ENCODE measurements at regions of chr2 and their contacts with region 1.

Region 1: DNA sequence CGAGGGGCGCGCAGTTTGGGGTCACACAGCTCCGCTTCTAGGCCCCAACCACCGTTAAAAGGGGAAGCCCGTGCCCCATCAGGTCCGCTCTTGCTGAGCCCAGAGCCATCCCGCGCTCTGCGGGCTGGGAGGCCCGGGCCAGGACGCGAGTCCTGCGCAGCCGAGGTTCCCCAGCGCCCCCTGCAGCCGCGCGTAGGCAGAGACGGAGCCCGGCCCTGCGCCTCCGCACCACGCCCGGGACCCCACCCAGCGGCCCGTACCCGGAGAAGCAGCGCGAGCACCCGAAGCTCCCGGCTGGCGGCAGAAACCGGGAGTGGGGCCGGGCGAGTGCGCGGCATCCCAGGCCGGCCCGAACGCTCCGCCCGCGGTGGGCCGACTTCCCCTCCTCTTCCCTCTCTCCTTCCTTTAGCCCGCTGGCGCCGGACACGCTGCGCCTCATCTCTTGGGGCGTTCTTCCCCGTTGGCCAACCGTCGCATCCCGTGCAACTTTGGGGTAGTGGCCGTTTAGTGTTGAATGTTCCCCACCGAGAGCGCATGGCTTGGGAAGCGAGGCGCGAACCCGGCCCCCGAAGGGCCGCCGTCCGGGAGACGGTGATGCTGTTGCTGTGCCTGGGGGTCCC is at the start of gene ITGA4:
- DNase-seq: peak; percentile 78 to 94 (median 86)
- ATAC-seq: peak; percentile 77
- H3K4me3 ChIP-seq: peak within 1 kb of the TSS; percentile 88
- H3K4me3 Mint-ChIP-seq: peak within 1 kb of the TSS; percentile 89
- H3K27ac ChIP-seq: peak within 1 kb of the TSS; percentile 85 to 91
- H3K27ac Mint-ChIP-seq: peak within 1 kb of the TSS; percentile 94
- H3K4me1 ChIP-seq: peaks cover 24% of the 10 kb centered on the region
- H3K4me1 Mint-ChIP-seq: peaks cover 53% of the 10 kb centered on the region
- H3K27me3 ChIP-seq: no peaks in the 10 kb centered on the region
- H3K27me3 Mint-ChIP-seq: no peaks in the 10 kb centered on the region
- CTCF ChIP-seq: peak; percentile 78
- total RNA-seq, gene ITGA4: 102 TPM

Region 2: GRCh38 chr2:181077128-181077709 is 380.0 kb before region 1 on chr2:
- CTCF ChIA-PET with region 1: interaction called, 4 read pairs
- POLR2A ChIA-PET with region 1: interaction called, 3 read pairs
- intact Hi-C with region 1: loop called (anchors 2 to 5 kb)
- DNase-seq: peak in 3 of 9 experiments; percentile 8 to 82 (median 76)
- ATAC-seq: peak; percentile 94
- H3K4me3 ChIP-seq: no peak overlapping the region
- H3K4me3 Mint-ChIP-seq: no peak overlapping the region
- H3K27ac ChIP-seq: no peak overlapping the region
- H3K27ac Mint-ChIP-seq: no peak overlapping the region
- H3K4me1 ChIP-seq: no peaks in the 10 kb centered on the region
- H3K4me1 Mint-ChIP-seq: no peaks in the 10 kb centered on the region
- H3K27me3 ChIP-seq: no peaks in the 10 kb centered on the region
- H3K27me3 Mint-ChIP-seq: no peaks in the 10 kb centered on the region
- CTCF ChIP-seq: peak; percentile 90

Region 3: DNA sequence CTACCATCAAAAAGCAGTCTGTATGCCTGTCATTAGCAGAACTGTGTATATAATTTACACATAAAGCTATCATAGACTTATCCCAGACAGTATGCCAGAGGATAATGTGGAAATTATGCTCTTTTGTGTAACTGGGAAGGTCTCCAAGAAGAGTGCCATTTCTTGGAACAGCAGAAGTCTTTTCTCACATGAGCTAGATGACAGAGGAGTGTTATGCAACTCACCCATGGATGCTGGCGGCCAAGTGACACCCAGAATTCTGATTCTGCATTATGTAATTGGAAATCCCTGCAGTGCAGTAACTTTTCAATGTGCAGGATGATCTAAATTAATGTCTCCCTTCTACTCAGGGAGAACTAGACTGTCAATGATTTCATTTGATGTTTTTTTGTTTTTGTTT is 316.8 kb before region 1 on chr2:
- CTCF ChIA-PET with region 1: interaction called, 10 read pairs
- POLR2A ChIA-PET with region 1: interaction called, 8 read pairs
- intact Hi-C with region 1: no loop called
- DNase-seq: peak in 2 of 9 experiments; percentile 60 to 73
- ATAC-seq: peak; percentile 15
- H3K4me3 ChIP-seq: no peak overlapping the region
- H3K4me3 Mint-ChIP-seq: peak overlapping the region; percentile 80
- H3K27ac ChIP-seq: peak overlapping the region; percentile 58 to 73
- H3K27ac Mint-ChIP-seq: peak overlapping the region; percentile 99
- H3K4me1 ChIP-seq: peaks cover 62% of the 10 kb centered on the region
- H3K4me1 Mint-ChIP-seq: peaks cover 79% of the 10 kb centered on the region
- H3K27me3 ChIP-seq: no peaks in the 10 kb centered on the region
- H3K27me3 Mint-ChIP-seq: no peaks in the 10 kb centered on the region
- CTCF ChIP-seq: no peak

Region 4: GRCh38 chr2:181275643-181276070 is 181.6 kb before region 1 on chr2:
- CTCF ChIA-PET with region 1: interaction called, 10 read pairs
- POLR2A ChIA-PET with region 1: interaction called, 4 read pairs
- intact Hi-C with region 1: no loop called
- DNase-seq: peak in 5 of 9 experiments; percentile 18 to 78 (median 59)
- ATAC-seq: peak; percentile 90
- H3K4me3 ChIP-seq: no peak overlapping the region
- H3K4me3 Mint-ChIP-seq: peak overlapping the region; percentile 35
- H3K27ac ChIP-seq: peak overlapping the region; percentile 17 to 68
- H3K27ac Mint-ChIP-seq: peak overlapping the region; percentile 79
- H3K4me1 ChIP-seq: peaks cover 31% of the 10 kb centered on the region
- H3K4me1 Mint-ChIP-seq: peaks cover 46% of the 10 kb centered on the region
- H3K27me3 ChIP-seq: no peaks in the 10 kb centered on the region
- H3K27me3 Mint-ChIP-seq: no peaks in the 10 kb centered on the region
- CTCF ChIP-seq: no peak

Region 5: DNA sequence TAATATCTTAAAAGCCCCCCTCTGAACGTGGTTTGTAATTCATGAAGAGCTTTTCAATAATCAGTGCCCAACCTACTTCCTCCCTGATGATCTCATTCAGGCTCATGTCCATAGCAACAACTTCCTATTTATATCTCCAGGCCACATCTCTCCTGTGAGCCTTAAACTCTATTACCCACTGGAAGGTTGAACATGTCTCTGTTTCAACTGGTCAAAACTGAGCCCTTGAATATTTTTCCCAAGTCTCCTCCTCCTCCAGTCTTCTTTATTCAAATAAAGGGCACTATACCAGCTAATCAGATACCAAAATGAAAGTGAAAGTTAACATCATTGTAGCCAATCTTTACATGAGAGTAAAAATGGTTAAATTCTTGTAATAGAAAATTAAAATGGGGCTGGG is 63.8 kb before region 1 on chr2:
- CTCF ChIA-PET with region 1: no interaction called
- POLR2A ChIA-PET with region 1: interaction called, 10 read pairs
- intact Hi-C with region 1: loop called in 1 of 2 experiments (anchors 5 kb)
- DNase-seq: peak in 2 of 9 experiments; percentile 62 to 80
- ATAC-seq: peak; percentile 58
- H3K4me3 ChIP-seq: peak overlapping the region; percentile 13 to 55
- H3K4me3 Mint-ChIP-seq: peak overlapping the region; percentile 76
- H3K27ac ChIP-seq: peak overlapping the region; percentile 38 to 97
- H3K27ac Mint-ChIP-seq: peak overlapping the region; percentile 87
- H3K4me1 ChIP-seq: peaks cover 17% of the 10 kb centered on the region
- H3K4me1 Mint-ChIP-seq: peaks cover 30% of the 10 kb centered on the region
- H3K27me3 ChIP-seq: no peaks in the 10 kb centered on the region
- H3K27me3 Mint-ChIP-seq: no peaks in the 10 kb centered on the region
- CTCF ChIP-seq: no peak

Region 6: GRCh38 chr2:181528441-181528840 is 71.2 kb after region 1 on chr2:
- CTCF ChIA-PET with region 1: no interaction called
- POLR2A ChIA-PET with region 1: no interaction called
- intact Hi-C with region 1: no loop called
- DNase-seq: no peak
- ATAC-seq: no peak
- H3K4me3 ChIP-seq: no peak overlapping the region
- H3K4me3 Mint-ChIP-seq: no peak overlapping the region
- H3K27ac ChIP-seq: no peak overlapping the region
- H3K27ac Mint-ChIP-seq: peak overlapping the region; percentile 14
- H3K4me1 ChIP-seq: no peaks in the 10 kb centered on the region
- H3K4me1 Mint-ChIP-seq: peaks cover 3% of the 10 kb centered on the region
- H3K27me3 ChIP-seq: no peaks in the 10 kb centered on the region
- H3K27me3 Mint-ChIP-seq: no peaks in the 10 kb centered on the region
- CTCF ChIP-seq: no peak

Region 7: DNA sequence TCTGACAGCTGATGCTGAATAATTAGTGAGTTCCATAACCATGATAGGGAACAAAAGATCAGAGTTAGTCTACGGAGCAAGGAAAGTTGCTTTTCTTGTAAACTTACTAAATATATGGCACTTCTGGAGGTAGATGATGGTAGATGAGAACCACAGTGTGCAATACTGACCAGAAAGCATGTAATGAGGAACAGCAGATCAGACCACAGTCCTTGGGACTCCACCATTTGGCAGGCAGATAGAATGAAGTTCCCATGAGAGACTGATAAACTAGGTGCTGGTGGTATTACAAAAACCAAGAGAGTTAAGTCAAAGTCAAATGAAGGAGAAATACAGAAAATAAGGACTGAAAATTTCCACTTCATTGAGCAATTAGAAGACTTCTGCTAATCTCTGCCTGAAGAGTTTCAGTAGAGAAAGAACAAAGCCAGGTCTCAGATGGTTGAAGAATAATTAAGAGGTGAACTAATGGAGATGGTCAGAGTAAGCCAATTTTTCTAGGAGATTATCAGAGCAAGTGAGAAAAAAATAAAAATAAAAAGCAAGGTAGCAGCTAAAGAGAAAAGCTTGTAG is 189.3 kb after region 1 on chr2:
- CTCF ChIA-PET with region 1: no interaction called
- POLR2A ChIA-PET with region 1: no interaction called
- intact Hi-C with region 1: no loop called
- DNase-seq: no peak
- ATAC-seq: no peak
- H3K4me3 ChIP-seq: no peak overlapping the region
- H3K4me3 Mint-ChIP-seq: no peak overlapping the region
- H3K27ac ChIP-seq: no peak overlapping the region
- H3K27ac Mint-ChIP-seq: no peak overlapping the region
- H3K4me1 ChIP-seq: no peaks in the 10 kb centered on the region
- H3K4me1 Mint-ChIP-seq: no peaks in the 10 kb centered on the region
- H3K27me3 ChIP-seq: peaks cover 0 to 2% of the 10 kb centered on the region in 2 experiments
- H3K27me3 Mint-ChIP-seq: peaks cover 37% of the 10 kb centered on the region
- CTCF ChIP-seq: no peak

Region 8: GRCh38 chr2:181891966-181892798 is 435.0 kb after region 1 on chr2:
- CTCF ChIA-PET with region 1: no interaction called
- POLR2A ChIA-PET with region 1: no interaction called
- intact Hi-C with region 1: loop called in 1 of 2 experiments (anchors 5 kb)
- DNase-seq: peak; percentile 26 to 77 (median 61)
- ATAC-seq: peak; percentile 63
- H3K4me3 ChIP-seq: peak overlapping the region; percentile 80 to 85
- H3K4me3 Mint-ChIP-seq: peak overlapping the region; percentile 92
- H3K27ac ChIP-seq: peak overlapping the region; percentile 53 to 55
- H3K27ac Mint-ChIP-seq: peak overlapping the region; percentile 86
- H3K4me1 ChIP-seq: peaks cover 19% of the 10 kb centered on the region
- H3K4me1 Mint-ChIP-seq: peaks cover 39% of the 10 kb centered on the region
- H3K27me3 ChIP-seq: peaks cover 0 to 3% of the 10 kb centered on the region in 2 experiments
- H3K27me3 Mint-ChIP-seq: peaks cover 12% of the 10 kb centered on the region
- CTCF ChIP-seq: peak; percentile 14

Measured in CD8-positive, alpha-beta T cell (primary cell).